GM23248 (cell line): ENCODE measurements at regions of chr14 and their contacts with region 1.

Region 1: GRCh38 chr14:39015360-39015961 is 87.6 kb downstream of the SEC23A start:
- DNase-seq: peak; percentile 71
- H3K4me3 ChIP-seq: no peak overlapping the region
- H3K27ac ChIP-seq: no peak overlapping the region
- H3K4me1 ChIP-seq: peaks cover 8% of the 10 kb centered on the region; the same call in 1 of the 2 replicates
- H3K27me3 ChIP-seq: no peaks in the 10 kb centered on the region

Region 2: DNA sequence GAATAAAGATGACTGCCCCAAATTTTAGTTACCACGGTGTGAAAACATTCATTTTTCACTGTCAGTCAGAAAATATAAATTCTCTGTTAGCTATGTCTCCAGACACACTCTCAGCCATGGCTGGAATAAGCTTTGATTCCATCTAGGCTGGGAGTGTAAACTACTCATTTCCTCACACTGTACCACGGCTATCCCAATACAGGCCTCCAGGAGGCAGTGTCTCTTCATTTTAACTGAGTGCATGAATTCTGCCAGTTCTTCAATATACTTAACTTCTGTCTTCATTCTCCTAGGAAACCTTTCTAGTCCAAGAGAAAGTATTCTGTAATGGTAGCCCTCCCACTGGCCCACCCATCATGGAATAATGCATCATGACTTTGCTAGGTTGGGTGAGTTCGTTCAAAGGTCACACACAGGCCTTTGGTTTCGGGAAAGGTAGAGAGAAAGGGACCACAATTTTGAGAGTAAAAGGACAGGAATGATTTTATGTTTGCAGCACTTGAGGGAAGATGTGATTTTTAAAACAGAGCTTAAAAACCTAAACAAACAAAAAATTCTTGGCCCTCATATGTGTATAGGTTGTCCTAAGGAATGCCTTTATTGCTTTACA is 293.5 kb before region 1 on chr14:
- in situ Hi-C with region 1: loop called (anchors 10 kb)
- DNase-seq: peak; percentile 68
- H3K4me3 ChIP-seq: no peak overlapping the region
- H3K27ac ChIP-seq: no peak overlapping the region
- H3K4me1 ChIP-seq: no peaks in the 10 kb centered on the region
- H3K27me3 ChIP-seq: no peaks in the 10 kb centered on the region

Region 3: GRCh38 chr14:38873941-38874612 is 141.4 kb before region 1 on chr14:
- in situ Hi-C with region 1: loop called (anchors 10 kb)
- DNase-seq: no peak
- H3K4me3 ChIP-seq: no peak overlapping the region
- H3K27ac ChIP-seq: no peak overlapping the region
- H3K4me1 ChIP-seq: no peaks in the 10 kb centered on the region
- H3K27me3 ChIP-seq: peaks cover 32% of the 10 kb centered on the region; the same call in 1 of the 2 replicates

Region 4: GRCh38 chr14:39229222-39229543 is 213.7 kb after region 1 on chr14:
- in situ Hi-C with region 1: no loop called
- DNase-seq: peak; percentile 83
- H3K4me3 ChIP-seq: no peak overlapping the region
- H3K27ac ChIP-seq: peak overlapping the region; percentile 65
- H3K4me1 ChIP-seq: peaks cover 28% of the 10 kb centered on the region
- H3K27me3 ChIP-seq: no peaks in the 10 kb centered on the region